ENCODE measurements at regions of chr16 and their contacts with region 1.

Region 1: DNA sequence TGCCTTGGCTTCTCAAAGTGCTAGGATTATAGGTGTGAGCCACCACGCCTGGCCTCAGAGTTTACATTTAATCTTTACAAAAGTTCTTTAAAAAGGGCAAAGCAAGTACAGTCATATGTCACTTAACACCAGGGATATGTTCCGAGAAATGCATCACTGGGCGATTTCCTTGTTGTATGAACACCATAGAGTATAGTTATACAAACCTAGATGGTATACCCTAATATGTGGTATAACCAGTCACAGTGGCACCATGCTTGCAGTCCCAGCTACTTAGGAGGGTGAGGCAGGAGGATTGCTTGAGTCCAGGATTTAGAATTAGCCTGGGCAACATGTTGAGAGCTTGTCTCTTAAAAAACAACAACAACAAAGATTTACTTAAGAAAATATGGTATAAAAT is 51.3 kb downstream of the NFATC3 start:
- DNase-seq: no peak
- H3K4me3 Mint-ChIP-seq: no peak overlapping the region
- H3K27ac Mint-ChIP-seq: no peak overlapping the region
- H3K4me1 Mint-ChIP-seq: peaks cover 37% of the 10 kb centered on the region
- H3K27me3 Mint-ChIP-seq: no peaks in the 10 kb centered on the region

Region 2: GRCh38 chr16:68100488-68100887 is 36.0 kb before region 1 on chr16:
- CTCF ChIA-PET with region 1: interaction called, 3 read pairs
- POLR2A ChIA-PET with region 1: no interaction called
- intact Hi-C with region 1: loop called (anchors 5 kb)
- DNase-seq: no peak
- H3K4me3 Mint-ChIP-seq: no peak overlapping the region
- H3K27ac Mint-ChIP-seq: no peak overlapping the region
- H3K4me1 Mint-ChIP-seq: peaks cover 72% of the 10 kb centered on the region
- H3K27me3 Mint-ChIP-seq: no peaks in the 10 kb centered on the region

Region 3: GRCh38 chr16:68146585-68146984 is 10.1 kb after region 1 on chr16:
- CTCF ChIA-PET with region 1: no interaction called
- POLR2A ChIA-PET with region 1: no interaction called
- intact Hi-C with region 1: no loop called
- DNase-seq: no peak
- H3K4me3 Mint-ChIP-seq: no peak overlapping the region
- H3K27ac Mint-ChIP-seq: no peak overlapping the region
- H3K4me1 Mint-ChIP-seq: peaks cover 54% of the 10 kb centered on the region
- H3K27me3 Mint-ChIP-seq: no peaks in the 10 kb centered on the region

Measured in activated CD4-positive, alpha-beta memory T cell treated with anti-CD3 and anti-CD28 coated beads for 36 hours (primary cell).